ENCODE measurements at regions of chr17 and their contacts with region 1.

Region 1: GRCh38 chr17:81854974-81855774 is 5.2 kb downstream of the P4HB start:
- DNase-seq: no peak
- H3K27ac ChIP-seq: peak overlapping the region; percentile 97
- CTCF ChIP-seq: no peak

Region 2: DNA sequence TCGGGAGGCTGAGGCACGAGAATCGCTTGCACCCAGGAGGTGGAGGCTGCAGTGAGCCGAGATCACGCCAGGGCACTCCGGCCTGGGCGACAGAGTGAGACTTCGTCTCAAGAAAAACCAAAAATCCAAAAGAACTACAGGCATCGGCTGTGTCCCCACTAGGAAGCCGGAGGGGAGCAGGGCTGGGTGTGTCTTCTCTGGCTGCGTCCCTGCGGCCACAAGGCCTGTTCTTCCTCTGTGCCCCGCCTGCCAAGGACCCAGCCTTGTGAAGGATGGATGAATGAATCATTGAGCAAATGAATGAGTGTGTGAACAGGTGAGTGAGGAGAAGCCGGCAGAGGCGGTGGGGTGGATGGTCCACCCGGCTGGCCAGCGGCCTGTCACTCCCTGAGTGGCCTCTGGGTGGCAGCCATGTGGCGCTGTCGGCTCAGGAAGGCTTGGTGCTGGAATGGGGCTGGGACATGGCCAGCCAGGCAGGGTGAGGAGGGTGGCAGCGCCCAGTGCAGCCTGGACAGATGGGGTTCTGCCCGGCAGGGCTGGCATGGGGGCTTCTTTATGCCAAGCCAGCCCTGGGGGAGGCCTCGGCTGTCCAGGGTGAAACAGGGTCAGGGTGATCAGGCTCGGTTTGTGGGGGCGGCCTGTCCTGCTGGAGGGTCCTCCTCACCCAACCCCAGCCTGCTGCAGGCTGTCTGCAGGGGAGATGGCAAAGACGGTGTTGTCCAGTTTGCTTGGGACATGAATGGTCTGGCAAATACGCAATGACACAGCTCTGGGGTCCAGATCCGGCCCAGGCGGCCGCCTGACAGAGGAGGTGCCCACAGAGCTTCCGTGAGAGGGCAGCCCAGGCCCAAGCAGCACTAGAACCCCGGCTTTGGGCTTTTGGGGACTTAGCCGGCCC is 121.4 kb before region 1 on chr17:
- CTCF ChIA-PET with region 1: interaction called, 11 read pairs
- POLR2A ChIA-PET with region 1: interaction called, 4 read pairs
- DNase-seq: peak; percentile 94
- H3K27ac ChIP-seq: peak overlapping the region; percentile 92
- CTCF ChIP-seq: peak; percentile 98

Region 3: DNA sequence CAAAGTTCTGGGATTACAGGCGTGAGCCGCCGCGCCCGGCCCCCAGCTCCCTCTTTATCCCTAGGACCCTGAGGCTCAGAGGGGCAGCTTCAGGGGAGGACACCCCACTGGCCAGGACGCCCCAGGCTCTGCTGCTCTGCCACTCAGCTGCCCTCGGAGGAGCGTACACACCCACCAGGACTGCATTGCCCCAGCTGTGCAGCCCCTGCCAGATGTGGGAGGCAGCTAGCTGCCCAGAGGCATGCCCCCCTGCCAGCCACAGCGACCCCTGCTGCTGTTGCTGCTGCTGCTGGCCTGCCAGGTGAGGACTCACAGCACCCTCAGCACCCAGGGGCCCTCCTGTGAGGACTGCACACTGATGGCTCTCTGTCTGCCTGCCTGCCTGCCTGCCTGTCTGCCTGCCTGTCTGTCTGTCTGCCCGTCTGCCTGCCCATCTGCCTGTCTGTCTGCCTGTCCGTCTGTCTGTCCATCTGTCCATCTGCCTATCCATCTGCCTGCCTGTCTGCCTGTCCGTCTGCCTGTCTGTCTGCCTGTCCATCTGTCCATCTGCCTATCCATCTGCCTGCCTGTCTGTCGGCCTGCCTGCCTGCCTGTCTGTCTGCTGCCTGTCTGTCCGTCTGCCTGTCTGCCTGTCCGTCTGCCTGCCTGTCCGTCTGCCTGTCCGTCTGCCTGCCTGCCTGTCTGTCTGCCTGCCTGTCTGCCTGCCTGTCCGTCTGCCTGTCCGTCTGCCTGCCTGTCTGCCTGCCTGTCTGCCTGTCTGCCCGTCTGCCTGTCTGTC is 46.2 kb before region 1 on chr17:
- CTCF ChIA-PET with region 1: no interaction called
- POLR2A ChIA-PET with region 1: no interaction called
- DNase-seq: no peak
- H3K27ac ChIP-seq: no peak overlapping the region
- CTCF ChIP-seq: 0 out of 2 replicates have a peak, but pooled peaks have one; percentile 11

Measured in RWPE1 (cell line).